H1 (cell line): ENCODE measurements at regions of chr14 and their contacts with region 1.

Region 1: DNA sequence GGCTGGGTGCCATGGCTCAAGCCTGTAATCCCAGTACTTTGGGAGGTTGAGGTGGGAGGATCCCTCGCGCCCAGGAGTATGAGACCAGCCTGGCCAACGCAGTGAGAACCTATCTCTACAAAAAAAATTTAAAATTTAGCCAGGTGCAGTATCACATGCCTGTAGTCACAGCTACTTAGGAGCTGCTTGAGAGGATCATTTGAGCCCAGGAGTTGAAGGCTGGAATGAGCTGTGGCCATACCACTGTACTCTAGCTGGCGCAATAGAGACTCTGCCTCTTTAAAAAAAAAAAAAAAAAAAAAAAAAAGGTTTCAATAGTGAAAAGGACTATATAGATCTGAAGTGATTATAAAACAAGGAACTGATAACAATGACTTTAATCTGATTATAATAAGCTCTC is 13.5 kb downstream of the PSMA3 start:
- DNase-seq: no peak
- H3K4me3 ChIP-seq: no peak overlapping the region
- H3K27ac ChIP-seq: no peak overlapping the region
- H3K4me1 ChIP-seq: no peaks in the 10 kb centered on the region
- H3K27me3 ChIP-seq: no peaks in the 10 kb centered on the region
- CTCF ChIP-seq: no peak
- EP300 ChIP-seq: no peak
- POLR2A ChIP-seq: no peak
- RAD21 ChIP-seq: no peak

Region 2: GRCh38 chr14:58244556-58245387 is 13.4 kb before region 1 on chr14 and contains the start of gene PSMA3:
- CTCF ChIA-PET with region 1: interaction called, 6 read pairs
- POLR2A ChIA-PET with region 1: interaction called, 23 read pairs
- DNase-seq: peak; percentile 88 to 96
- H3K4me3 ChIP-seq: peak within 1 kb of the TSS; percentile 84 to 97 (median 88)
- H3K27ac ChIP-seq: peak within 1 kb of the TSS; percentile 92
- H3K4me1 ChIP-seq: peaks cover 0 to 5% (median 0%) of the 10 kb centered on the region in 4 experiments; a peak in 1 of 7 replicates
- H3K27me3 ChIP-seq: no peaks in the 10 kb centered on the region
- CTCF ChIP-seq: no peak
- EP300 ChIP-seq: no peak
- POLR2A ChIP-seq: peak; percentile 94 to 98
- RAD21 ChIP-seq: no peak
- total RNA-seq, gene PSMA3: 283 and 285 TPM in 2 replicates

Region 3: DNA sequence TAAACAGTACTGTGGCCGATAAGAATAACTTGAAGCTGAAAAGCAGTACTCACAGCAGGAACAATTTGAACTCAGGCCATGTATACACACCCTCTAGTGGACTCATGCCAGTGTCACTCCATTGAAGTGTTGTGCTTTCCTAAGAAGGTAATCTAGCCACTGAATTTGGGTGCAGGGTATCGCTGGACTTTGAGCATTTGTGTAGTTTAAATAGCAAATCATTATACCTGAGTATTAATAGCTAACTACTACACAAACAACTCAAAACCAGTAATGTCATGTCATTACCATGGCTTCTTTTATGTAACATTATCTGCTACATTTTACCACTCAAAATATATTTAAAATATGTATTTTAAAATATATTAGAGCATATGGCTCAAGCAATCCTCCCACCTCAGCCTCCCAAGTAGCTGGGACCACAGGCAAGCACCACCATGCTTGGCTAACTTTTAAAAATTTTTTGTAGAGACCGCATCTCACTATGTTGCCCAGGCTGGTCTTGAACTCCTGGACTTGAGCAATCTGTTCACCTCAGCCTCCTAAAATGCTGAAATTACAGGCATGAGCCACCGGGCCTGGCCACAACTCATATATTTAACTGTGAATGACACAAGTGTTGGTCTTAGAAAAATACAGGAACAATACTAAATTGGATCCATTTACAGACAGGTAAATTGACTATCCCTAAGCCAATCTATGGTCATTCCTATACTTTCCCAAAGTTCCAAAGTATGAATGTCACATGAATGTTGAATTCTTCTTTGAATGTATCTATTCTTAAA is 14.6 kb after region 1 on chr14:
- CTCF ChIA-PET with region 1: interaction called, 6 read pairs
- POLR2A ChIA-PET with region 1: interaction called, 23 read pairs
- DNase-seq: no peak
- H3K4me3 ChIP-seq: no peak overlapping the region
- H3K27ac ChIP-seq: no peak overlapping the region
- H3K4me1 ChIP-seq: no peaks in the 10 kb centered on the region
- H3K27me3 ChIP-seq: no peaks in the 10 kb centered on the region
- CTCF ChIP-seq: peak in 1 of 3 experiments; percentile 37; a peak in 1 of 4 replicates
- EP300 ChIP-seq: no peak
- POLR2A ChIP-seq: no peak
- RAD21 ChIP-seq: no peak